B cell (primary cell): ENCODE measurements at regions of chr17 and their contacts with region 1.

Region 1: GRCh38 chr17:69269131-69269998 is 40.7 kb upstream of the ABCA10 start:
- DNase-seq: no peak
- ATAC-seq: no peak
- H3K4me3 ChIP-seq: no peak overlapping the region
- H3K4me3 Mint-ChIP-seq: no peak overlapping the region
- H3K27ac ChIP-seq: no peak overlapping the region
- H3K27ac Mint-ChIP-seq: no peak overlapping the region
- H3K4me1 ChIP-seq: no peaks in the 10 kb centered on the region
- H3K4me1 Mint-ChIP-seq: no peaks in the 10 kb centered on the region
- H3K27me3 ChIP-seq: no peaks in the 10 kb centered on the region
- H3K27me3 Mint-ChIP-seq: no peaks in the 10 kb centered on the region
- CTCF ChIP-seq: no peak

Region 2: GRCh38 chr17:69300222-69300621 is 30.9 kb after region 1 on chr17:
- CTCF ChIA-PET with region 1: no interaction called
- POLR2A ChIA-PET with region 1: no interaction called
- intact Hi-C with region 1: loop called (anchors 5 kb)
- DNase-seq: no peak
- ATAC-seq: no peak
- H3K4me3 ChIP-seq: no peak overlapping the region
- H3K4me3 Mint-ChIP-seq: no peak overlapping the region
- H3K27ac ChIP-seq: no peak overlapping the region
- H3K27ac Mint-ChIP-seq: no peak overlapping the region
- H3K4me1 ChIP-seq: no peaks in the 10 kb centered on the region
- H3K4me1 Mint-ChIP-seq: no peaks in the 10 kb centered on the region
- H3K27me3 ChIP-seq: no peaks in the 10 kb centered on the region
- H3K27me3 Mint-ChIP-seq: no peaks in the 10 kb centered on the region
- CTCF ChIP-seq: no peak